Panc1 (cell line): ENCODE measurements at regions of chr5 and their contacts with region 1.

Region 1: DNA sequence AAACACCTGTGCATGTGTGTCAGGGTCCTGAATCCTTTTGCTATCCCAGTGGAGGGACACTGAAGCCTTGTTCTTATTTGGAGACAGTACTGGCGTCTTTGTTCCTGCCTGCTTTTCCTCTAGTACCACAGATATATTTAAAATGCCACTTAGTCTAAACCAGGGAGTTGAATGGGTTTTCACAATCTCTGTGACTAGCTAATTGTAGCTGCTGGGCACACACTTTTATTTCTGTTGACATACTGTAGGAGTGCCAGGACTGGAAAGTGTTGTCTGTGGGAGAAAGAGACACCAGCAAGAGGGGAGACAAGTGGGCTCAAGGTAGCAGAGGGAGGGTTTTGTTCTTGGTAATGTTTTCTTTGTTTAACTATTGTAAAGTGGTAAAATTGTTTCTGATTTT is 174.0 kb upstream of the SV2C start:
- DNase-seq: no peak
- ATAC-seq: no peak
- H3K4me3 ChIP-seq: no peak overlapping the region
- H3K27ac ChIP-seq: no peak overlapping the region
- H3K4me1 ChIP-seq: no peaks in the 10 kb centered on the region
- H3K27me3 ChIP-seq: no peaks in the 10 kb centered on the region; the same call in 1 of the 2 replicates
- CTCF ChIP-seq: no peak

Region 2: GRCh38 chr5:76223696-76224095 is 314.5 kb after region 1 on chr5:
- CTCF ChIA-PET with region 1: interaction called, 10 read pairs
- POLR2A ChIA-PET with region 1: no interaction called
- in situ Hi-C with region 1: no loop called
- intact Hi-C with region 1: no loop called
- DNase-seq: no peak
- ATAC-seq: no peak
- H3K4me3 ChIP-seq: no peak overlapping the region
- H3K27ac ChIP-seq: no peak overlapping the region
- H3K4me1 ChIP-seq: no peaks in the 10 kb centered on the region
- H3K27me3 ChIP-seq: peaks cover 7% of the 10 kb centered on the region
- CTCF ChIP-seq: no peak